ENCODE measurements at regions of chr15 and their contacts with region 1.

Region 1: DNA sequence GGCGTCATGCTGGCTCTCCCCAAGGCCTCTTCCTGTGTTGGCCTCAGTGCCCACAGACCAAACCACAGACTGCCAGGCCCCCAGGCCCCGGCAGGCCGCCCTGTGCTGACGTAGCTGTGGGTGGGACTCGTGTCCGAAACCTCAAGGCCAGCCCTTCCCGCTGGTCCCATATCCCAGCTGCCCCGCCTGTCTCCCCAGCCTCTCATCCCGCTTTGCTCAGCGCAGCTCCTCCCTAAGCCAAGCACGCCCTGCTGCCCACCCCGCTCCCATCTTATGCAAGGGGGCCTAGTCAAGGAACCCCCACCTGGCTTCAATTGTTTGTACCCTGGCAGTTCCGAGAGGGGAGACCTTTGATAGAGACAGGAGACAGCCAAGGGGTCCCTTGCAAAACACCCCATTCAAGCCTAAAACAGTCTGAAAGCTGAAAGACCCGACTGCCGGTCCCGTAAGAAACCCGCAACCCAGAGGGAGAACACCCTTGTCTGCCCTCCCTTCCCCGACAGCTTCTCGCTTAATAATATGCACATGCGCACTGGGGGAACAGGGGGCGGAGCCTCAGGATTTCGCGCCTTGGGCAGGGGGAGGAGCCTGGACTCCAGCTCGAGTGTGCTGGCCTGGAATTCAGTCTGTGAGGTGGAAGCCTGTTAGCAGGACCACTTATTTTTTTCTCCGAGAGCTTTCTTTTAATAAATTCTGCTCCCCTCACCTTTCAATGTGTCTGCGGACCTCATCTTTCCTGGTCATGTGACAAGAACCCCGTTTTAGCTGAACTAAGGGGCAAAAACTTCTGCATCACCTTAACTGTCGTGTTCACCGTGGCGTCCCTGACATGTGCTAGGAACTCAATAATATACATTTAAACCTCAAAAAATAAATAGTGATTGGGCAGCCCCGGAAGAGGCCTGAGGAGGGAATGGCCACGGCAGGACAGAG is 17.2 kb downstream of the TNFAIP8L3 start:
- DNase-seq: peak; percentile 71
- H3K4me3 ChIP-seq: peak overlapping the region in 2 of 4 donors; percentile 2 to 10
- H3K27ac ChIP-seq: peak overlapping the region; percentile 32 to 57 (median 46)
- H3K4me1 ChIP-seq: peaks cover 0 to 5% (median 2%) of the 10 kb centered on the region in 4 donors
- H3K27me3 ChIP-seq: no peaks in the 10 kb centered on the region
- CTCF ChIP-seq: no peak
- EP300 ChIP-seq: no peak
- POLR2A ChIP-seq: no peak

Region 2: GRCh38 chr15:51212909-51213308 is 135.4 kb after region 1 on chr15:
- in situ Hi-C with region 1: no loop called
- intact Hi-C with region 1: loop called (anchors 2 kb)
- DNase-seq: no peak
- H3K4me3 ChIP-seq: no peak overlapping the region
- H3K27ac ChIP-seq: no peak overlapping the region
- H3K4me1 ChIP-seq: no peaks in the 10 kb centered on the region
- H3K27me3 ChIP-seq: no peaks in the 10 kb centered on the region
- CTCF ChIP-seq: no peak
- EP300 ChIP-seq: no peak
- POLR2A ChIP-seq: no peak

Measured in transverse colon (tissue), 4 donors.